SK-N-SH (cell line): ENCODE measurements at regions of chr14 and their contacts with region 1.

Region 1: DNA sequence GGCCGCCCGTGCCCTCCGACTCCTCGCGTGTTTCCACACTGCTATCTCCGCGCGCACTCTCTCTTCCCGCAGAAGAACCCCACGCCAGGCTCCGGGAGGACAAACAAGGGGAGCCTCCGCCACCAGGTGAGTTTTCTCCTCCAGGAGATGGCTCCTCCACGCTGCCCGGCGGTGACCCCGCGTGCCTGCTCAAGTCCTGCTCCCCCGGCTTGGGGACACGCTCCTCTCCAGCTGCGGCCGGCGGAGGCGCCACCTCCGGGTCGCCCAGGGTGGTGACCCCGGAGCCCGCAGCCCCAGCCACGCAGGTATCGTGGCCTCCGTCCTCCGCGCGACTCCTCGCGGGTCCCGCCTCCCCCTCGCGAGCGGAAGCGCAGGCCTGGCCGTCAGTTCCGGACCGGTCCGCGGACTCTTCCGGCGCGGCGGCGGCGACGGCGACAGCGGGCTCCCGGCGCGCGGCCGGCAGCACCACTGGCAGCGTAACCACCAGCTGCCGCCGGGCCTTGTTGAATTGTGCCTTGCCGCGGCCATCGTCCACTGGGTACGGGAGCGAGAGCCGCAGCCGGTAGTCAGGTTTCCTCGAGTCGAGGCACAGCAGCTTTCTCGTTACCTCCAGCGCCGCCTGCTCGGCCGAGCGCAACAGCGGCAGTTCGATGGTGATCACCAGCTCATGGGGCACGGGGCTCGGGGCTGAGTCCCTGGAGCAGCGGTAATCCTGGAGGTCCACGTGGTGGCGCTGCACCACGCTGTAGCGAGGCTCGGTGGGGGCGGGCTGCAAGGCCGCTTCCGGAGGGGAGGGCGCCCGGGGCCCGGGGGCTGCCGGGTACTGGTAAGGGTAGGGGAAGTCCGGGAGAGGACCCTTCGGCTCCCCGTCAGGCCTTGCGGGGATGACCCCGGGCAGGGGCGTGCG is 1.2 kb downstream of the DNAAF2 start:
- DNase-seq: peak; percentile 97
- H3K4me3 ChIP-seq: peak overlapping the region; percentile 72 to 86
- H3K27ac ChIP-seq: peak overlapping the region; percentile 94 to 95
- H3K4me1 ChIP-seq: peaks cover 4 to 7% of the 10 kb centered on the region in 2 experiments; a peak in 3 of 4 replicates
- H3K27me3 ChIP-seq: no peaks in the 10 kb centered on the region
- CTCF ChIP-seq: peak; percentile 90
- EP300 ChIP-seq: no peak
- RAD21 ChIP-seq: peak; percentile 77

Region 2: DNA sequence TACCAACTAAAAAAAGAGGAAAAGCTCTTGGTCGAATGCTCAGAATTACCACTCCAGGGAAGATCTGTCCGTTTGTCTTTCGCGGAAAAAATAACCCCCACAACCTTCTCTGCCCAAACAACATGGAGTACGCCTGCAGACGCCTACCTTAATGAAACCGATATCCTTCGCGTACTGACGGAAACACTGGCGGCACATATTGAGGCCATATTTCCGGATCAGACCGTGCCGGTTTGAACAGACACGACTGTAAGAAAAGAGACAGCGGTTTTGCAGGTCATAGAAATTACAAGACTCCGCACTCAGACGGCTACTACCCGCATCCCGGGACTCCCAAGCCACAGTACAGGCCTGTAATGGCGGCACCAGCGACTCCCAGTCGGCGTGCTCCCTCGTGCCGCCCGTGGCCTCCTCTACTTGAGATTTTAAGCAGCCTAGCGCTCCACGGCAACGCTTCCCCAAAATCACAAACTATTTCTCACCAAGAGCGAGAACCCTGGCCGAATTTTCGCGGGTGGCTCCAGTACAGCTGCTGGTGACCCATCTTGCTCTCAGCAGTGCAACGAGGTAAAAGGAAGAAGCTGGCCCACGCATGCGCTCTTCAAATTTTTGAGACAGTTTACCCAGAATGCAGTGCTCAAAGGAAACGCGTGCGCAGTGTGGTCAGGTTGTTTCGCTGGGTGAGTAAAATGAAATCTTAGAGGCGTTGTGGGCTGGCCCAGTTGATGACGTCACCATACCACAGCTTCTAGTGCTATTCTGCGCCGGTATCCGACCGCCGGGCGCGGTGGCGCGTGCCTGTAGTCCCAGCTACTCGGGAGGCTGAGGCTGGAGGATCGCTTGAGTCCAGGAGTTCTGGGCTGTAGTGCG is 47.9 kb before region 1 on chr14 and contains the start of gene RPS29:
- CTCF ChIA-PET with region 1: interaction called, 19 read pairs
- POLR2A ChIA-PET with region 1: interaction called, 6 read pairs
- DNase-seq: peak; percentile 89
- H3K4me3 ChIP-seq: peak within 1 kb of the TSS; percentile 72 to 91
- H3K27ac ChIP-seq: peak within 1 kb of the TSS; percentile 82 to 84
- H3K4me1 ChIP-seq: peaks cover 3 to 7% of the 10 kb centered on the region in 2 experiments; a peak in 1 of 4 replicates
- H3K27me3 ChIP-seq: no peaks in the 10 kb centered on the region
- CTCF ChIP-seq: no peak
- EP300 ChIP-seq: peak in 1 of 2 experiments; percentile 28; a peak in 1 of 4 replicates
- RAD21 ChIP-seq: no peak
- polyA plus RNA-seq, gene RPS29: 11,220 and 15,074 TPM in 2 replicates

Region 3: DNA sequence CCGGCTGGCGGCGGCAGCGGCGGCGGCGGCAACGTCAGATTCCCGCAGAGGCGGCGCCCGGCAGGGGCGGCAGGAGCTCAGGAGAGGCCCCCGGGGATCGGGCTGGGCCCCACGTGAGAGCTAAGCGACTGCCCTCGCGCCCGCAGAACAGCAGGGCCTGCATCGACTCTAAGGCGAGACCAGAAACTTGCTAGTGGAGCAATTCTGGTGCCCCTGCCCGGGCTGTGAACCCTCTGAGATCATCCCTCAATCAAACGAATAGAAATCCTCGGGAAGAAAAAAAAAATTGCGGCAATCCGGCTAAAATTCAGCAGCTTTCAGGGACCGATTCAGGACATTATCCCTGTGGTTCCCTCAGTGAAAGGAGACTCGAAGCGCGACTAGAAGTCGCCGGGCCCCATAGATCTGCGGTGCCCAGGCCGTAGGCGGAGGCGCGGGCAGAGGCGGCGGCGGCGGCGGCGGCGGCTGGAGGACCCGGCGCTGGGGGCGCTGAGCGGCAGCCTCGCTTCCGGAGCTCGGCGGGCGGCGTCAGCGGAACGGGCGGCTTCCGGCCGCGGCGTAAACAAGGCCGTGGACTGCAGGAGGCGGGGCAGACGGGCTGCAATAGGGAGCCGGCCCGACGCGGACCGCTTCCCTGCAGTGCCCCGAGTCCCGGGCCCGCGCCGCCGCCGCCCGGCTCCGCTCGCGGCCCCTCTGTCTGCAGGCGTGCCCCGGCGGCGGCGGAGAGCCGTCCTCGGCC is 133.8 kb after region 1 on chr14 and contains the start of gene KLHDC2:
- CTCF ChIA-PET with region 1: interaction called, 17 read pairs
- POLR2A ChIA-PET with region 1: interaction called, 27 read pairs
- DNase-seq: peak; percentile 92
- H3K4me3 ChIP-seq: peak within 1 kb of the TSS; percentile 85 to 97
- H3K27ac ChIP-seq: peak within 1 kb of the TSS; percentile 96
- H3K4me1 ChIP-seq: peaks cover 13 to 16% of the 10 kb centered on the region in 2 experiments; a peak in 3 of 4 replicates
- H3K27me3 ChIP-seq: no peaks in the 10 kb centered on the region
- CTCF ChIP-seq: peak; percentile 58
- EP300 ChIP-seq: peak; percentile 11 to 70; a peak in 2 of 4 replicates
- RAD21 ChIP-seq: no peak
- polyA plus RNA-seq, gene KLHDC2: 41.1 and 52.0 TPM in 2 replicates

Region 4: GRCh38 chr14:49828640-49829039 is 194.7 kb after region 1 on chr14:
- CTCF ChIA-PET with region 1: interaction called, 26 read pairs
- POLR2A ChIA-PET with region 1: interaction called, 5 read pairs
- DNase-seq: no peak
- H3K4me3 ChIP-seq: no peak overlapping the region
- H3K27ac ChIP-seq: no peak overlapping the region
- H3K4me1 ChIP-seq: no peaks in the 10 kb centered on the region
- H3K27me3 ChIP-seq: no peaks in the 10 kb centered on the region
- CTCF ChIP-seq: no peak
- EP300 ChIP-seq: no peak
- RAD21 ChIP-seq: no peak

Region 5: DNA sequence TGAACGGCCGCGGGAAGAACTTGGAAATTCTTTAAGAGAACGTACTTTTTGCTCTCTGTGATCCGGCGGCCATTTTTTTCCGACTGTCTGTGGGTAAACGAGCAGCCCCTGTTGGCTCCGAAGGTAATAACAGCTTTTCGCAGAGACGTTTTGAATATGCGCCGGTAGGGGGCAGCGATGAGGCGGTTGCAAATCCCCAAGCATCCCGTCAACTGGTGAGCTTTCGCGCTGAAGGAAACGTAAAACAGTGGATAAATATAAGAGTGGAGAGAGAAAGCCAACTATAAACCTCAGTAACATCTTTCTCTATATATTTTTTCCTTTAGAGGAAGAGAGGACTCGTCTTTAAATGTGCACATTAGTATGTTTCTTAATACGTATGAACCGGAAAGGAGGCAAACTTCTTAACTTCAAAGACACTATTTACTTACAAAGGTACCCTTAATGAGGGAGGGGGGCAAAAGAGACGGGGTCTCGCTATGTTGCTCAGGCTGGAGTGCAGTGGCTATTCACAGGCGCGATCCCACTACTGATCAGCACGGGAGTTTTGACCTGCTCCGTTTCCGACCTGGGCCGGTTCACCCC is 228.3 kb after region 1 on chr14:
- CTCF ChIA-PET with region 1: interaction called, 13 read pairs
- POLR2A ChIA-PET with region 1: interaction called, 5 read pairs
- DNase-seq: peak; percentile 58
- H3K4me3 ChIP-seq: peak overlapping the region; percentile 61 to 98
- H3K27ac ChIP-seq: peak overlapping the region; percentile 84 to 93
- H3K4me1 ChIP-seq: peaks cover 3 to 5% of the 10 kb centered on the region in 2 experiments; a peak in 2 of 4 replicates
- H3K27me3 ChIP-seq: no peaks in the 10 kb centered on the region
- CTCF ChIP-seq: peak; percentile 100
- EP300 ChIP-seq: no peak
- RAD21 ChIP-seq: no peak